ENCODE measurements at regions of chr7 and their contacts with region 1.

Region 1: DNA sequence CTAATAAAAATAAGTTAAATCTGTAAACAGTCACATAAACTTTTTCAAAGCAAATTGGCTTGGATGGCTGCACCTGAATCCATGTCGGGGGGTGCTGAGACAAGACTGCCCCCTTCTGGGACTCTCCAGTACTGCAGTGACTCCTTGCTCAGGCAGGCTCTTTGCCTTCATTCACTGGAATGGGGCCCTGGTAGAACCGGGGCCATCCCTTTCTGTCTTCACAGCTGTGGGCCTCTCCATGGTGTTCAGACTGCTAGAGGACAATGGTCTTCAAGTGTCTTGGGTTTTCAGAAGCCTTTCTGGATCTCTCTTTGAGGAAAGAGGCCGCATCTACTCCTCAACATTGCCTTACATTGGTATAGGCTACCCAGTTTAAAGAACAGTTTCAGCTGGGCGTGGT is 16.1 kb upstream of the IMPDH1 start:
- DNase-seq: peak in 1 of 2 experiments; percentile 80
- H3K4me3 ChIP-seq: no peak overlapping the region
- H3K27ac ChIP-seq: no peak overlapping the region
- H3K4me1 ChIP-seq: peaks cover 30% of the 10 kb centered on the region
- H3K27me3 ChIP-seq: no peaks in the 10 kb centered on the region
- CTCF ChIP-seq: peak; percentile 95

Region 2: DNA sequence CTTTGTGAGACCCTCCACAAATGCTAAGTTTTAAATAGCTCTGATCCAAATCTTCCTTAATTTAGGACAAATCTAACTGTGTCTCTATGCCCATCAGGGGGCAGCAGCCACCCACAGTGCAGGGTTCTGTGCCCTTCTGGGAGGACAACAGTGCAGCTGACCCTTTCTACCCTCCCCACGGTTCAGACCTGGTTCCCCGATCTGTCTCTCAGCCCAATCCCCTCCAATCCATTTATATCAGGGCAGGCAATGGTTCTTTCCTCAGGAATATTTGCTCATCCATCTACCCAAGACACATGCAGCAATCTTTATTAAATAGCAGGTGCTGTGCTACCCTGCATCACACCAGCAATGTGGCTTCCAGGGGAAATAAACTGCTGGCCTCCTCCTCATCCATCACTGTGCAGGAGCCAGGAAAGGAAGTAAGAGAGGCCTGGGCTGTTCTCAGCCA is 78.2 kb before region 1 on chr7:
- CTCF ChIA-PET with region 1: interaction called, 25 read pairs
- POLR2A ChIA-PET with region 1: no interaction called
- intact Hi-C with region 1: loop called (anchors 1 kb)
- DNase-seq: peak; percentile 52 to 62
- H3K4me3 ChIP-seq: no peak overlapping the region
- H3K27ac ChIP-seq: no peak overlapping the region
- H3K4me1 ChIP-seq: peaks cover 13% of the 10 kb centered on the region
- H3K27me3 ChIP-seq: no peaks in the 10 kb centered on the region
- CTCF ChIP-seq: peak; percentile 88

Region 3: DNA sequence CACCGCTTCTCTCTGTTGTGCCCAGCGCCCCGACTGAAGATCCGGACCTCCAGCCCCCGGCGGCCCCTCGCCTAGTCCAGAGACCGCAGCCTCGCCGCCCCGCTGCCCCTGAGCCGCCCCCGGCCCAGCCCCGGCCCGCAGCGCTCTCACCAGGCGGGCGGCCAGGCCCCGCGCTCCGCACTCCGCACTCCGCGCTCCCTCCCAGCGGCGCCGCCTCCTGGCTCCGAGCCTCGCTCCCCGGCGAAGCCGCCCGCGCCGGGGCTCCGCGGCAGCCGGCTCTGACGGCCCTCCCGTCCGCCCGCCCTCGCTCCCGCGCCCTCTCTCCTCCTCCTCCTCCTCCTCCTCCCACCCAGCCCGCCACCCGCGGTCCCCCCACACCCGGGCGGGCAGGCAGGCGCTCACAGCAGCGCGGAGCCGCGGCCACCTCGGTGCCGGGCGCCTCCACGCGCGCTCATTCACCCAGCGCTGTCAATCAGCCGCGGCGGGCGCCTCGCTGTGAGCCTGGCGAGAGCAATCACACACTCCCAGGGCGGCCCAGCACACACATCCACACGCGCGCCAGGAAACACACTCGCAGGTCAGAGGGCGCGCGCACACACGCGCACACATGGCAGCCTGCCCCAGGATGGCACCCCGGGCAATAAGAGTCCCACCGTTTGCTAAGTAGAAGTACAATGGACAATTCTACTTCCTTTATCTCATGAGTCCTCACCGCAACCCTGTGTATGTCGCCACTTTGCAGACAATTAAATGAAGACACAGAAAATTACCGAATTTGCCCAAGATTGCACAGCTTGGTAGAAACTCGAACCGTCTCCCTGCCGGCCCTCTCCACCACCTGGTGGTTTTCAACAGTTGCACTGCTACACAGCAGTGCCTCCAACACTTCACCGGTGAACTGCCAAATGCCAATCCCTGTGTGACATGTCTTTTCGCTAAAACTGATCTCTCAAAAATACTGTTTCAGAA is 64.2 kb before region 1 on chr7 and contains the start of gene PRRT4:
- CTCF ChIA-PET with region 1: no interaction called
- POLR2A ChIA-PET with region 1: no interaction called
- intact Hi-C with region 1: no loop called
- DNase-seq: peak in 1 of 2 experiments; percentile 38
- H3K4me3 ChIP-seq: peak within 1 kb of the TSS; percentile 67
- H3K27ac ChIP-seq: no peak within 1 kb of the TSS
- H3K4me1 ChIP-seq: peaks cover 27% of the 10 kb centered on the region
- H3K27me3 ChIP-seq: peaks cover 10% of the 10 kb centered on the region; the same call in 1 of the 2 replicates
- CTCF ChIP-seq: no peak; the same call in 1 of the 2 replicates
- total RNA-seq, gene PRRT4: 0.26 and 0.70 TPM in 2 replicates

Region 4: DNA sequence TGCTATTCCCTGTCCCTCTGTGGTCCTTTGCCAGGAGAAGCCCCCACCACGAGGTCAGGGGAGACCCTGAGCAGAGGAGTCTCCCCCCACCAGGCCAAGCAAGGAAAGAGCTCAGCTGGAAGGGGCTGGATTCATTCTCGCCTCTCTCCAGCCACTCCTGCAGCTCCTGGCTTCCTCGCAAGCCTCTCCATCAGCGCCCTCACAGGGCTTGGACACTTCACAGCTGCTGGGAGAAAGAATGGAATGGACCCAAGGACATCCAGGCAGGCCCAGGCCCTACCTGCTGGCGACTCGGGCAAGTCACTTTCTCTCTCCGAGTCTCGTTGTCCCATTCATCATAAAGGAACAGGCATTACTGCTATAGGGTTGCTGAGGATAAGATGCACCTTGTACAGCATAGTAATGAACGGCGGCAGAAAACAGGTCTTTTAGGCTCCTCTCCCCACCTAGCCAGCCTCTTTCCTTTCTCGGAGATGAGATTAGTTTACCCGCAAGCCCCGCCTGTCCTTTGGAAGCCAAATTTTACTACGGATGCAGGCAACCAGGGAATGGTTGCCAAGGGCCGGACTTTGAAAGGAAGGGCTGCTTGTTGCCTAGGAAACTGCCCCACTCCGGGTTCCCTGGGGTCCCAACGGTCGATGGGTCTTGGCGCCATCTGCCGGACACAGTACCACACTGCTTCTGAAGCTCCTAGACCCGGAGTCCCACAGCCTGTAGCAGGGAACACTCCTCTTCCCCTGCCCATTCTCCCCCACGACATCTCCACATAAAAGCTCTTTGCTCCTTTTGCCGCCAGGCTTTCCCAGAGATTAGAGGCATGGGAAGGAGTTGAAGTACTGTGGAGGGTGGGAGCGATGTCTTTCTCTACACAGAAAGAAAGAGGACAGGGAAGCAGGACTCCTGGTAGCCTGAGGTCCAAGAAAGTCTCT is 38.4 kb before region 1 on chr7:
- CTCF ChIA-PET with region 1: interaction called, 5 read pairs
- POLR2A ChIA-PET with region 1: no interaction called
- intact Hi-C with region 1: loop called (anchors 5 kb)
- DNase-seq: peak; percentile 49 to 72
- H3K4me3 ChIP-seq: no peak overlapping the region
- H3K27ac ChIP-seq: no peak overlapping the region
- H3K4me1 ChIP-seq: peaks cover 29% of the 10 kb centered on the region
- H3K27me3 ChIP-seq: no peaks in the 10 kb centered on the region
- CTCF ChIP-seq: peak; percentile 85

Region 5: DNA sequence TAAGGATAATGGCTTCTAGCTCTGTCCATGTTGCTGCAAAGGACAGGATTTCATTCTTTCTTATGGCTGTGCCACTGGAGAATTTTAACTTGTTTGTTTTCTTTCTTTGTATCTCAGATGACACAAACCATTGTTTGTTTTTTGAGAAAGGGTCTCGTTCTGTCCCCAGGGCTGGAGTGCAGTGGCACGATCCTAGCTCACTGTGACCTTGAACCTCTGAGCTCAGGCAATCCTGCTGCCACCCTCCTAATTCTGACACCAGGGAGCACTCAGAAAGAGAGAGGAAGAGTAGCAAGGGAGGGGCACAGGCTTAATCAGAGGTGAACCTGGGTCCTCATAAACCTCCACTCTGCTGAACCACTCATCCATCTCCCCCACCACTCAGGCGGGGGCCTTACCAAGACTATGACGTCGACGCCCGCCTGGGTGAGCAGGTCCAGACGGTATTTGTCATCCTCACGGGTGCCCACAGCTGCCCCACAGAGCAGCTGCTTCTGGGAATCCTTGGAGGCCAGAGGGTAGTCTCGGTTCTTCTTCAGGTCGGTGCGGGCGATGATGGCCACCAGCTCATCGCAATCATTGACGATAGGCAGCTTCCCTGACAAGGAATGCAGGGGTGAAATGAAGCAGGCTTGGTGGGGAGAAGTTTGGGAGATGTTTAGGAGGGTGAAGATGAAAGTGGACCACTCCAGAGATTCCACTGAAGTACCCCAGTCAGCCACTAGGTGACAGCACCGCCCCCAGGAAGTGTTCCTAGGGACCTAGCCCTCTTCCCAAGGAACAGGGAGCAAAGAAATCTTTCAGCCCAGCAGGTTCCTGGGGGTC is 27.6 kb before region 1 on chr7:
- CTCF ChIA-PET with region 1: interaction called, 6 read pairs
- POLR2A ChIA-PET with region 1: no interaction called
- intact Hi-C with region 1: loop called (anchors 1 kb)
- DNase-seq: peak in 1 of 2 experiments; percentile 68
- H3K4me3 ChIP-seq: no peak overlapping the region
- H3K27ac ChIP-seq: no peak overlapping the region
- H3K4me1 ChIP-seq: no peaks in the 10 kb centered on the region
- H3K27me3 ChIP-seq: no peaks in the 10 kb centered on the region
- CTCF ChIP-seq: peak; percentile 92

Region 6: GRCh38 chr7:128455551-128456254 is 29.9 kb after region 1 on chr7 and contains the start of gene HILPDA:
- CTCF ChIA-PET with region 1: interaction called, 73 read pairs
- POLR2A ChIA-PET with region 1: no interaction called
- intact Hi-C with region 1: no loop called
- DNase-seq: peak; percentile 82 to 94
- H3K4me3 ChIP-seq: peak within 1 kb of the TSS; percentile 84
- H3K27ac ChIP-seq: peak within 1 kb of the TSS; percentile 56
- H3K4me1 ChIP-seq: peaks cover 29% of the 10 kb centered on the region
- H3K27me3 ChIP-seq: no peaks in the 10 kb centered on the region
- CTCF ChIP-seq: no peak; the same call in 1 of the 2 replicates
- total RNA-seq, gene HILPDA: 22.8 and 30.3 TPM in 2 replicates

Region 7: GRCh38 chr7:128869138-128869943 is 443.5 kb after region 1 on chr7:
- CTCF ChIA-PET with region 1: no interaction called
- POLR2A ChIA-PET with region 1: no interaction called
- intact Hi-C with region 1: no loop called
- DNase-seq: peak; percentile 48 to 78
- H3K4me3 ChIP-seq: peak overlapping the region; percentile 60
- H3K27ac ChIP-seq: no peak overlapping the region
- H3K4me1 ChIP-seq: peaks cover 38% of the 10 kb centered on the region
- H3K27me3 ChIP-seq: no peaks in the 10 kb centered on the region
- CTCF ChIP-seq: no peak

Measured in PC-9 (cell line).